Activated T-helper 1 cell treated with anti-CD3 and anti-CD28 coated beads, Interleukin-12 subunit alpha, Interleukin-12 subunit beta, Interleukin-2, Interleukin-4 antibody, amounts not matched to agents 30 ng/mL and 10 ng/mL and 1 ng/mL, durations not matched to agents 14 hours and 24 hours and 36 hours (primary cell): ENCODE measurements at regions of chr6 and their contacts with region 1.

Region 1: GRCh38 chr6:135162678-135163439 is 18.2 kb upstream of the MYB start:
- DNase-seq: no peak
- H3K4me3 Mint-ChIP-seq: peak overlapping the region; percentile 53
- H3K27ac Mint-ChIP-seq: peak overlapping the region; percentile 87
- H3K4me1 Mint-ChIP-seq: peaks cover 83% of the 10 kb centered on the region
- H3K27me3 Mint-ChIP-seq: no peaks in the 10 kb centered on the region

Region 2: GRCh38 chr6:135088818-135089809 is 73.7 kb before region 1 on chr6:
- intact Hi-C with region 1: loop called (anchors 1 kb)
- DNase-seq: peak; percentile 58
- H3K4me3 Mint-ChIP-seq: peak overlapping the region; percentile 57
- H3K27ac Mint-ChIP-seq: peak overlapping the region; percentile 93
- H3K4me1 Mint-ChIP-seq: peaks cover 89% of the 10 kb centered on the region
- H3K27me3 Mint-ChIP-seq: no peaks in the 10 kb centered on the region

Region 3: GRCh38 chr6:135094403-135094848 is 68.4 kb before region 1 on chr6:
- intact Hi-C with region 1: loop called (anchors 1 kb)
- DNase-seq: peak; percentile 20
- H3K4me3 Mint-ChIP-seq: peak overlapping the region; percentile 24
- H3K27ac Mint-ChIP-seq: peak overlapping the region; percentile 95
- H3K4me1 Mint-ChIP-seq: peaks cover 65% of the 10 kb centered on the region
- H3K27me3 Mint-ChIP-seq: peaks cover 2% of the 10 kb centered on the region

Region 4: DNA sequence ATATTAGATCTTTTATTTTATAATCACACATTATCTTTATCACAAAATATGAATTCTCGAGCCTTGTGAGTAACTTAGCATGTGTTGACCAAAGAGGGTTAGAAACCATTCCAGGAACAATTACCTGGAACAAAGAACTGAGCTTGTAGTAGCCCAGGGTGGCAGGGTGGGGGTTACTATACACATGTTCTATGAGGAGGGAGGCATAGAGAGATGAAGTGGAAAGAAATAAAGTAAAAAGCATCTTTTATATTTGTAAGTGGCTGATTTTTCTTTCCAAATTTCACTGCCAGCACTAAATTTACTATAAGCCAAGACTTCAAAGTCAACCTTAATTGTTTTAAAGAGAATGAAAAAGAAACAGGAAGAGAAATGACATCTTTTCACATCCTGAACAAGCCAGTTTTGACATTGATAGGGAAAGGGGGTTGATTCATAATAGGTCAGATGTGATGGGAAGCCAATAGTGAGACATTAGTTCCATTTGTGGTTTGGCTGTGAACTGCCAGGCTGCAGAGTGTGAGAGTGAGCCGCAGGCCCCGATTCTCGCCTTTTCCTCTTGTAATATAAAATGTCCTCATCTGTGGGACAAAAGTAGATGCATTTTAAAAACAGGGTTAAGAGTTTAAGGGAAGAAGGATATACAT is 34.5 kb before region 1 on chr6:
- intact Hi-C with region 1: loop called (anchors 1 kb)
- DNase-seq: peak; percentile 53
- H3K4me3 Mint-ChIP-seq: peak overlapping the region; percentile 66
- H3K27ac Mint-ChIP-seq: peak overlapping the region; percentile 97
- H3K4me1 Mint-ChIP-seq: peaks cover 63% of the 10 kb centered on the region
- H3K27me3 Mint-ChIP-seq: no peaks in the 10 kb centered on the region

Region 5: GRCh38 chr6:135212020-135212806 is 49.4 kb after region 1 on chr6:
- intact Hi-C with region 1: loop called (anchors 2 kb)
- DNase-seq: no peak
- H3K4me3 Mint-ChIP-seq: peak overlapping the region; percentile 72
- H3K27ac Mint-ChIP-seq: peak overlapping the region; percentile 90
- H3K4me1 Mint-ChIP-seq: peaks cover 63% of the 10 kb centered on the region
- H3K27me3 Mint-ChIP-seq: no peaks in the 10 kb centered on the region